Activated CD4-positive, alpha-beta memory T cell treated with anti-CD3 and anti-CD28 coated beads, Interleukin-2, amount 10 ng/mL, durations not matched to agents 7 days and 5 days (primary cell): ENCODE measurements at regions of chr22 and their contacts with region 1.

Region 1: GRCh38 chr22:42090596-42091454 is at the start of gene NDUFA6:
- DNase-seq: peak; percentile 99
- H3K4me3 Mint-ChIP-seq: peak within 1 kb of the TSS; percentile 99
- H3K27ac Mint-ChIP-seq: peak within 1 kb of the TSS; percentile 99
- H3K4me1 Mint-ChIP-seq: peaks cover 31% of the 10 kb centered on the region
- H3K27me3 Mint-ChIP-seq: no peaks in the 10 kb centered on the region
- total RNA-seq, gene NDUFA6: 94.8 to 97.1 TPM

Region 2: GRCh38 chr22:41998361-41999275 is 92.2 kb before region 1 on chr22 and contains the start of gene WBP2NL:
- CTCF ChIA-PET with region 1: no interaction called
- POLR2A ChIA-PET with region 1: interaction called, 19 read pairs
- DNase-seq: peak; percentile 92
- H3K4me3 Mint-ChIP-seq: peak within 1 kb of the TSS; percentile 98
- H3K27ac Mint-ChIP-seq: peak within 1 kb of the TSS; percentile 88
- H3K4me1 Mint-ChIP-seq: peaks cover 35% of the 10 kb centered on the region
- H3K27me3 Mint-ChIP-seq: peaks cover 2% of the 10 kb centered on the region
- total RNA-seq, gene WBP2NL: 2.0 to 2.3 TPM

Region 3: DNA sequence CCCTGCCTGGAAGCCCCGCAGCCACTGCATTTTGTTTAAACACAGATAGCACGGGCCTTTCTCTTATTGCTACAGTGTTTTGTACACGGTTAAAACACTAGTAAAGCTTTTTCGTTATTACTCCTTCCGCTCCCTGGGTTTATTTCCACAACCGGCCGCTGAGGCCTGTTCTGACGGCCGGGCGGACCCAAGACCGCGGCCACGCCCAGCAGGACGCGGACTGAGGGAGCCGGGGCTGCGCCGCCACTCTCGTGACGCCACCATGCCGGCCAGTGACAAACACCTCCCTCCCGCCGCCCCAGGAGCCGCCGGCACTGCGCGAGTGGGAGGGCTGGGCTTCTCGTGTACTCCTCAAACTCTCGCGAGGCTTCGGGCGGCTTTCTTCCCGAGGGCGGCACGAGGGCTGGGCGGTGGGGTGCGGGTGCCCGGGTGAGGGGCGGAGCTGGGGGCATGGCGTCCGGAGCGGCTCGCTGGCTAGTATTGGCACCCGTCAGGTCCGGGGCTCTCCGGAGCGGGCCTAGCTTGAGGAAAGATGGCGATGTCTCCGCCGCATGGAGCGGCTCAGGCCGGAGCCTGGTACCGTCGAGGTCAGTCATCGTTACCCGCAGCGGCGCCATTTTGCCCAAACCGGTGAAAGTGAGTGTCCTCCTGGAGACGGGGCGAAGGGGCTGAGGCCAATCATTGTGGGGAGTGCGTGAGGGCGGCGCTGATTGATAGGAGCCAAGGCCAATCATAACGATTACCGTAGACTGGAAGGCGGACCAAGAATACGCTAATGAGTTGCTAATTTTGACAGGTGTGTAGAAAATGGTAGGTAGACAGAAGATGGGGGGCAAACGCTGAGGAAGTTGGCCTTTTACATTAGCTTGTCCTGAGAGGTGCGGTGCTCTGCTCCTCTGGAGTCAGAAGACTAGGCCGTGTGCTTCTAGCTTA is 11.2 kb before region 1 on chr22 and contains the start of gene SMDT1:
- CTCF ChIA-PET with region 1: interaction called, 35 read pairs
- POLR2A ChIA-PET with region 1: interaction called, 185 read pairs
- DNase-seq: peak; percentile 98
- H3K4me3 Mint-ChIP-seq: peak within 1 kb of the TSS; percentile 95
- H3K27ac Mint-ChIP-seq: peak within 1 kb of the TSS; percentile 92
- H3K4me1 Mint-ChIP-seq: peaks cover 42% of the 10 kb centered on the region
- H3K27me3 Mint-ChIP-seq: no peaks in the 10 kb centered on the region
- total RNA-seq, gene SMDT1: 92.7 to 98.1 TPM

Region 4: DNA sequence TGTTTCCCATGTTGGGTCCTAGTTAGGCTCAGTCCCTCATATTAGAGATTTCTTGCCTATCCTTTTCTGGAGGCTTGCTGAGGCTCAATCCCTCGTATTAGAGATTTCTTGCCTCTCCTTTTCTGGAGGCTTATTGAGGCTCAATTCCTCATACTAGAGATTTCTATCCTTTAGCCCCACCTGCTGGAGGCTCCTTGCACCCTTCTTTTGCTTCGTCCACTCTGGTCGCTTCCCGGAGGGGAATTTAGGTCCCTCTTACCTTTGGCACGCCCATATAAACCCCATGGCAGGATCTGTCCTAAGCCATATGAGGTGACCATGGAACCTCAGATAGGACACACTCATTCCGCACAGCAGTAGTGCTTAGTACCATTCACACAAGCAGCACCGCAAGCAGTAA is 23.9 kb after region 1 on chr22:
- CTCF ChIA-PET with region 1: interaction called, 18 read pairs
- POLR2A ChIA-PET with region 1: interaction called, 19 read pairs
- DNase-seq: no peak
- H3K4me3 Mint-ChIP-seq: no peak overlapping the region
- H3K27ac Mint-ChIP-seq: no peak overlapping the region
- H3K4me1 Mint-ChIP-seq: peaks cover 16% of the 10 kb centered on the region
- H3K27me3 Mint-ChIP-seq: no peaks in the 10 kb centered on the region

Region 5: DNA sequence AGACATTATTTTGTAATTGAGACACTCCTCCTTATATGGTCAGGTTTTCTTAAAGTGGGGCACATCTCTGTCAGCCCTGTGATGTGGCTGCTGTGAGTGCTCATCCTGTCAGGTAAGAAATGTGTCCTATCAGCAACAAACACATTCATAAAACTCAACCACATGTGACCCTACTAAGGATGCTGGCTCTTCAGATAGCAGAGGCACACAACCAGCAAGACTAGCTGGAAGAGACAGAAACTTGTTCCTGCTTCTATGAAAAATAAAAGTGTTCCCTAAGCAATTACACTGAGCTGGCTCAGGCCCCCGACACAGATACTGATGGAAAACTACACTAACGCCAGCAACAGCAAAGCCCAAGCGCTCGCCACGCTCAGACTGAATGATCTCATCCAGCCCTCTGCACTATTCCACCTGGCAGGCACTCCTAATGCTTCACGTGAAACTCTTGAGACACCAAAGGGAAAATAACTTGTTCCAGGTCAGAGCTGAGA is 89.6 kb after region 1 on chr22:
- CTCF ChIA-PET with region 1: interaction called, 4 read pairs
- POLR2A ChIA-PET with region 1: interaction called, 15 read pairs
- DNase-seq: peak; percentile 67
- H3K4me3 Mint-ChIP-seq: peak overlapping the region; percentile 36
- H3K27ac Mint-ChIP-seq: peak overlapping the region; percentile 90
- H3K4me1 Mint-ChIP-seq: peaks cover 86% of the 10 kb centered on the region
- H3K27me3 Mint-ChIP-seq: no peaks in the 10 kb centered on the region

Region 6: DNA sequence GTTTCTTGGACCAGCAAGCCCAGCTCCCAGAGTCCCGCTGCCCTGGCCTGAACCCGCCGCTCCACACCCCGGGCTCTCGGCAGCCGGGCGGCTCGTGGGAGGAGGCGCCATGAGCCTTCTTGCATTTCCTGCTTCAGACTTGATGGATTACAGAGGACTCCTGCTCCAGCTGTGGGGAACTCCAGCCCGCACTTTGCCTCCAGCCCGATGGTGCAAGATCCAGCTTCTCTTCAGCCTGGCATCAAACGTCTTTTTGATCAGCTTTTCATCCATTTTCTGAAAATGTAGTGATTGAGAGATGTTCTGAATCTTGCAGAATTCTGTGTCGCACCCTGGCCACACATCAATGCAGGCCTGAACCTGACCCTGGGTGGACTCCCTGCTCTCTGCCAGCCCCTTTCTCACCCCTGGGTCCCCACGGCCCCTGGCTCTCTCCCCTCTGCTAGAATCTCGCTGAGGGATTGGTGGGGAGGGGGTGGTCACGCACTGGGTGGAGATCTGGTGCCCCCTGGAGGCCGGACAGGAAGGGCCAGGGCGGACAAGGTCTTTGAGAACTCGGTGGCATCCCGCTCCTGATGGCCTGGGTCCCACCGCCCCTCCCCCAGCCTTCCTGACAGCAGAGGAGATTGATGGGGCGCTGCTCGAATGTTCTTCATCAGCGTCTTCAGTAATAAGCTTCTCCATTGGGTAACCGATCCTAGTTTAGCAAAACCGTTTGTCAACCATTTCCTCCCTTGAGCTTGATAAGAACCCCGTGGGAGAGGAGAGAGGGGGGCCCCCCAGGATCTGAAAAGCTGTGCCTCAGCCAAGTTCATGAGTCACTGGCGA is 353.5 kb after region 1 on chr22:
- CTCF ChIA-PET with region 1: interaction called, 47 read pairs
- POLR2A ChIA-PET with region 1: interaction called, 47 read pairs
- DNase-seq: peak; percentile 85
- H3K4me3 Mint-ChIP-seq: peak overlapping the region; percentile 64
- H3K27ac Mint-ChIP-seq: peak overlapping the region; percentile 69
- H3K4me1 Mint-ChIP-seq: peaks cover 31% of the 10 kb centered on the region
- H3K27me3 Mint-ChIP-seq: peaks cover under 1% of the 10 kb centered on the region